MCF 10A (cell line): ENCODE measurements at regions of chr19 and their contacts with region 1.

Region 1: GRCh38 chr19:41775360-41775695 is 20.0 kb downstream of the CEACAM6 start:
- DNase-seq: peak; percentile 82
- H3K4me3 Mint-ChIP-seq: no peak overlapping the region
- H3K27ac Mint-ChIP-seq: no peak overlapping the region
- H3K4me1 Mint-ChIP-seq: peaks cover 7% of the 10 kb centered on the region
- H3K27me3 Mint-ChIP-seq: peaks cover 56% of the 10 kb centered on the region
- CTCF ChIP-seq: no peak

Region 2: DNA sequence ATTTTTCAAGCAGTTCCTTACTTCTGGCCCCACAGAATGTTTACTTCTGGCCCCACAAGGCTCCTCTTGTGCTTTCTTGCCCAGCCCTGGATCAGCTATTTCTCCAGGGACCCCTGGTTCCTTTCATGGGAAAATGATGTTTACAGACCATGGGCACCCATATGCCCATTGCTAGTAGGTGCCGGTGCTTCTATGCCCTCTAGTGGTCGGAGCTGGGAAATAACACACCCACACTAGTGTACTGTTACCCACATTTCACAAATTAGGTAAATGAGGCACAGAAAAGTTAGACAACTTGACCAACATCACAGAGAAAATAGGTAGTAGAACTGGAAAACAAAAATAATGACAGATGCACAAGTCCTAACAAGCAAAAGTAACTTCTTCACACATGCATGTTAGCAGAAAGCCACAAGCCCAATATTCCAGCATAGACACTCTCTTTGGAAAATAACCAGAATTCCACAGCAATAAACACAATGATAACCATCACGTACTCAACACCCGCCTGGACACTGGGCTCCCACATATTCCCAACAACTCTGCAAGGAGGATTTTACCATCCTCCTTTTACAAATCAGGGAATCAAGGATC is 21.3 kb before region 1 on chr19:
- CTCF ChIA-PET with region 1: interaction called, 18 read pairs
- POLR2A ChIA-PET with region 1: no interaction called
- intact Hi-C with region 1: no loop called
- DNase-seq: peak; percentile 65
- H3K4me3 Mint-ChIP-seq: no peak overlapping the region
- H3K27ac Mint-ChIP-seq: no peak overlapping the region
- H3K4me1 Mint-ChIP-seq: peaks cover 5% of the 10 kb centered on the region
- H3K27me3 Mint-ChIP-seq: peaks cover 62% of the 10 kb centered on the region
- CTCF ChIP-seq: peak; percentile 76